ENCODE measurements at regions of chr18 and their contacts with region 1.

Region 1: GRCh38 chr18:72041313-72042032 is 502.7 kb downstream of the CBLN2 start:
- H3K4me3 Mint-ChIP-seq: no peak overlapping the region
- H3K27ac Mint-ChIP-seq: no peak overlapping the region
- H3K4me1 Mint-ChIP-seq: no peaks in the 10 kb centered on the region
- H3K27me3 Mint-ChIP-seq: no peaks in the 10 kb centered on the region

Region 2: DNA sequence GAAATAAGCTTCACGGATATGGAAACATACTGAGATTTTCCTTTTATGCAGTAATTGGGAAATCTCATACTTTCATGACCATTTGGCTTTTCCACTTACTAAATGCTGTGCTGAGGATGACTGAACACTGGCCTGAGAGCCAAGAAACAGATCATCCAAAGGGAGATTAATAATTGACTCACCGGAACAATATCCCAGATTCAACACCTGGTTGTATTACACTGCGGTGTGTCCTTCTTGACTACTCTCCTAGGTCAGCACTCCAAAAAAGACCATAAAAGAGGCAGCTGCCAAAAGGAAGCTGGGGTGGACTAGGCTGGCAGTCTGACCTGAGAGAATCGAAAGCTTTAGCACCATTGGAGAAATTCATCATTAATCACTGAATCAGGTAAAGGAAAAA is 33.6 kb after region 1 on chr18:
- intact Hi-C with region 1: no loop called
- H3K4me3 Mint-ChIP-seq: no peak overlapping the region
- H3K27ac Mint-ChIP-seq: no peak overlapping the region
- H3K4me1 Mint-ChIP-seq: no peaks in the 10 kb centered on the region
- H3K27me3 Mint-ChIP-seq: no peaks in the 10 kb centered on the region

Region 3: GRCh38 chr18:72091369-72091768 is 49.9 kb after region 1 on chr18:
- intact Hi-C with region 1: loop called (anchors 10 kb)
- H3K4me3 Mint-ChIP-seq: no peak overlapping the region
- H3K27ac Mint-ChIP-seq: no peak overlapping the region
- H3K4me1 Mint-ChIP-seq: no peaks in the 10 kb centered on the region
- H3K27me3 Mint-ChIP-seq: no peaks in the 10 kb centered on the region